HEK293T (cell line): ENCODE measurements at regions of chrX and their contacts with region 1.

Region 1: GRCh38 chrX:103729015-103729414 is 18.3 kb downstream of the TMEM31 start:
- DNase-seq: no peak

Region 2: GRCh38 chrX:103686199-103687072 is 42.6 kb before region 1 on chrX and contains the start of gene MORF4L2:
- CTCF ChIA-PET with region 1: interaction called, 10 read pairs
- POLR2A ChIA-PET with region 1: interaction called, 7 read pairs
- DNase-seq: peak; percentile 91